ENCODE measurements at regions of chr11 and their contacts with region 1.

Region 1: GRCh38 chr11:116787786-116788486 is at the start of gene ZPR1:
- DNase-seq: peak; percentile 79
- H3K4me3 ChIP-seq: peak within 1 kb of the TSS; percentile 76 to 92 (median 88)
- H3K27ac ChIP-seq: peak within 1 kb of the TSS; percentile 52
- H3K4me1 ChIP-seq: peaks cover 13% of the 10 kb centered on the region
- H3K27me3 ChIP-seq: no peaks in the 10 kb centered on the region
- CTCF ChIP-seq: no peak
- POLR2A ChIP-seq: peak; percentile 97
- total RNA-seq, gene ZPR1: 48.6 and 54.5 TPM in 2 replicates

Region 2: GRCh38 chr11:116800610-116801009 is 12.7 kb after region 1 on chr11:
- CTCF ChIA-PET with region 1: interaction called, 14 read pairs
- POLR2A ChIA-PET with region 1: no interaction called
- dilution Hi-C with region 1: no loop called
- intact Hi-C with region 1: no loop called
- DNase-seq: no peak
- H3K4me3 ChIP-seq: no peak overlapping the region
- H3K27ac ChIP-seq: no peak overlapping the region
- H3K4me1 ChIP-seq: no peaks in the 10 kb centered on the region
- H3K27me3 ChIP-seq: peaks cover 4 to 8% of the 10 kb centered on the region in 2 experiments
- CTCF ChIP-seq: no peak
- POLR2A ChIP-seq: no peak

Region 3: DNA sequence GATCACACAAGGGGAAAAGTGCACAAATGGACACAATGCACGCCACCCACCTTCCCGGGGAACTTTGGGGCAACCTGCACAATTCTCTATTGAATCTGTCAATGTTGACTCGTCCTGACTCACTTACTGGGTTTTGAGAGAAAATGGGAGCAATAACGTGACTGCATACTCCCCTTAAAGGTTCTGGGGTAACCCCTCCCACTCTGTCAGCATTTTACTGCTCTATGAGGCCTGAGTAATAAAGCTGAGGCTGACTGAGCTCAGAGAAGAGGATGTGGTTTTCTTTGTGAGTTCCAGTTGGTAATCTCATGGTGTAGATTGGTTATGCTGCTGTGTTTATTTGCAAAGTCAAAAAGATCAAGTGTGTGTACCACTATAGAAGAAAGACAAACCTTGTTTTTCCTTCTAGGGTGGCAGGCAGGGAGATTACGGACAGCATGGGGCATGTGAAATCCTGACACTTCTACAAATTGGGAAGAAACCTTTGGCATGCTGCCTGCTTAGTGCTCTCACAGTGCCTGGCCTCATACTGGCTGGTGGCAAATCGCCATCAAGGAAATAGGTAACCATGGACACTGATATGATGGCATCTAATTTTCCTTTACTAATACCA is 65.6 kb after region 1 on chr11:
- CTCF ChIA-PET with region 1: interaction called, 27 read pairs
- POLR2A ChIA-PET with region 1: interaction called, 8 read pairs
- dilution Hi-C with region 1: no loop called
- intact Hi-C with region 1: no loop called
- DNase-seq: peak; percentile 79
- H3K4me3 ChIP-seq: no peak overlapping the region
- H3K27ac ChIP-seq: peak overlapping the region; percentile 74
- H3K4me1 ChIP-seq: peaks cover 26% of the 10 kb centered on the region
- H3K27me3 ChIP-seq: no peaks in the 10 kb centered on the region
- CTCF ChIP-seq: no peak
- POLR2A ChIP-seq: no peak

Region 4: GRCh38 chr11:117098269-117099232 is 310.6 kb after region 1 on chr11 and contains the start of gene SIK3:
- CTCF ChIA-PET with region 1: interaction called, 38 read pairs
- POLR2A ChIA-PET with region 1: interaction called, 3 read pairs
- dilution Hi-C with region 1: no loop called
- intact Hi-C with region 1: loop called (anchors 1 kb)
- DNase-seq: peak; percentile 92
- H3K4me3 ChIP-seq: peak within 1 kb of the TSS; percentile 67 to 82 (median 74)
- H3K27ac ChIP-seq: peak within 1 kb of the TSS; percentile 98
- H3K4me1 ChIP-seq: peaks cover 17% of the 10 kb centered on the region
- H3K27me3 ChIP-seq: no peaks in the 10 kb centered on the region
- CTCF ChIP-seq: peak; percentile 15 to 53
- POLR2A ChIP-seq: no peak
- total RNA-seq, gene SIK3: 20.6 and 21.3 TPM in 2 replicates

Region 5: GRCh38 chr11:117143871-117144476 is 356.0 kb after region 1 on chr11 and contains the start of gene PAFAH1B2:
- CTCF ChIA-PET with region 1: interaction called, 24 read pairs
- POLR2A ChIA-PET with region 1: no interaction called
- dilution Hi-C with region 1: no loop called
- intact Hi-C with region 1: no loop called
- DNase-seq: peak; percentile 90
- H3K4me3 ChIP-seq: peak within 1 kb of the TSS; percentile 79 to 95 (median 90)
- H3K27ac ChIP-seq: peak within 1 kb of the TSS; percentile 33
- H3K4me1 ChIP-seq: peaks cover 11% of the 10 kb centered on the region
- H3K27me3 ChIP-seq: no peaks in the 10 kb centered on the region
- CTCF ChIP-seq: no peak
- POLR2A ChIP-seq: peak; percentile 91
- total RNA-seq, gene PAFAH1B2: 128 and 130 TPM in 2 replicates

Region 6: DNA sequence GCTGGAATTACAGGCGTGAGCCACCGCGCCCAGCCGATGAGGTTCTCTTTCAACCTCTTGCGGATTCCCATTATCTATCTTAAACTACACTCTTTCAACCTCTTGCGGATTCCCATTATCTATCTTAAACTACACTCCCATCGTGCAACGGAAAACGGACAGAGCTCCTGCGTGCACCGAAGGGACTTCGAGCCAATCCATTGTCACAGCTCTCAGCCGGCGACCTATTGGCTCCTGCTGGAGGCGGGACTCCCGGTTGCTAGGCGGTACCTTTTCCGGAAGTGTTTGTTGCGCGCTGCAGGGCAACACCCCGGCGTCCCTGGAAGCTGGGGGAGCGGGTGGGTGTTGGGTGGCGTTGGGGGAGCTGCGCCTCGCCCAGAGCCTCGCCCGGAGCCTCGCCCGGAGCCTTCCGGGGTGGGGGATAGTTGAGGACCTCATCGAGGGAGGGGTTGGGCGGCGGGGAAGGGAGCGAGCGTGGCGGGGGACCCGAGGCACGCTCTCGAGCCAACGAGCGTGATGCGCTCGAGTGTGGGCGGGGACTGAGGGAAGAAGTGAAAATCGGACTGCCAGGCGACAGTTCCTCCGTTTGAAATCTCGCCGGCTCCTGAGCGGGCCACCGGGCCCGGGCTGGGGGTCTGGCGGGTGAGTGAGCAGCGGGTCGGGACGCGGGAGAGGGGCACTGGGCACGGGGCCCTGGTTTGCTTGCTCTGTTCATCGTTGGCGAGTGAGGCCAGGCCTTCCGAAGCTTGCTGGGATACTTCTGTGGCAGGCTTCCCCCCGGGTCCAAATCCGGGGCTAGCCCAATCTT is 539.8 kb after region 1 on chr11 and contains the start of gene CEP164:
- CTCF ChIA-PET with region 1: no interaction called
- POLR2A ChIA-PET with region 1: no interaction called
- dilution Hi-C with region 1: no loop called
- intact Hi-C with region 1: loop called (anchors 5 kb)
- DNase-seq: peak; percentile 95
- H3K4me3 ChIP-seq: peak within 1 kb of the TSS; percentile 62 to 79 (median 78)
- H3K27ac ChIP-seq: peak within 1 kb of the TSS; percentile 48
- H3K4me1 ChIP-seq: peaks cover 9% of the 10 kb centered on the region
- H3K27me3 ChIP-seq: no peaks in the 10 kb centered on the region
- CTCF ChIP-seq: no peak
- POLR2A ChIP-seq: peak; percentile 85
- total RNA-seq, gene CEP164: 39.5 and 48.4 TPM in 2 replicates

Measured in endothelial cell of umbilical vein (primary cell).